ENCODE measurements at regions of chr15 and their contacts with region 1.

Region 1: GRCh38 chr15:100873029-100873677 is 6.5 kb upstream of the ALDH1A3 start:
- DNase-seq: peak; percentile 72
- H3K4me3 ChIP-seq: no peak overlapping the region
- H3K27ac ChIP-seq: no peak overlapping the region
- H3K27me3 ChIP-seq: peaks cover 7% of the 10 kb centered on the region
- CTCF ChIP-seq: peak; percentile 95

Region 2: DNA sequence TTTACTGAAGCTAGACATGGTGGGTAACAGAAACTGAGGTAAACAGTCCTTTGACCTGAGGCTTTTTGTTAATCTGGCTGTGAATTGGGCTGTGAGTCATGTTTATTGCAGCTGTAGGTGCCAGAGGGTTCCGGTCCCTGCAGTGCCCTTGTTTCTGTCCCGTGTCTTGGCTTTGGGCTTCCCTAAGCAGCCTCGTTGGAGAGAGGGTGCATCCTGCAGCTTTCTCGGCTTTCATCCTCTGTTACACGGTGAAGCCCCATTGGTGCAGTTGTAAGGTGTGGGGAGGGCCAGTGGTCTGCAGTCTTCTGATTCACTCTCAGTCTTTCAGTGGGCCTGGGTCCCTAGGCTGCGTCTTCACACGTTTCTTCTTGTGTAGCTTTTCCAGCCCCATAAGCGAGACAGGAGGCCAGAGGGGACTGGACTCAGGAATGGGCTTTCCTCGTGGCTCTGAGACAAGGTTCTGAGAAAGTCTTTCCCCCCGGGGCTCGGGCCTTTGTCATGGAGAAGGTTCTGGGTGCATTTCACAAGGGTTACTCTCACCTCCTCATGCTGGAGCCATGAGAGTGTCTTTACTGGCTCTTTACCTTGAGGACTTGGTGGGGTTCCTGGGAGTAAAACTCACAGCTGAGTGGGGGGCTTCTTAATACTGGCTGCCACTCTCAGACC is 237.6 kb before region 1 on chr15:
- CTCF ChIA-PET with region 1: interaction called, 16 read pairs
- POLR2A ChIA-PET with region 1: no interaction called
- DNase-seq: no peak
- H3K4me3 ChIP-seq: no peak overlapping the region
- H3K27ac ChIP-seq: no peak overlapping the region
- H3K27me3 ChIP-seq: no peaks in the 10 kb centered on the region
- CTCF ChIP-seq: no peak

Region 3: DNA sequence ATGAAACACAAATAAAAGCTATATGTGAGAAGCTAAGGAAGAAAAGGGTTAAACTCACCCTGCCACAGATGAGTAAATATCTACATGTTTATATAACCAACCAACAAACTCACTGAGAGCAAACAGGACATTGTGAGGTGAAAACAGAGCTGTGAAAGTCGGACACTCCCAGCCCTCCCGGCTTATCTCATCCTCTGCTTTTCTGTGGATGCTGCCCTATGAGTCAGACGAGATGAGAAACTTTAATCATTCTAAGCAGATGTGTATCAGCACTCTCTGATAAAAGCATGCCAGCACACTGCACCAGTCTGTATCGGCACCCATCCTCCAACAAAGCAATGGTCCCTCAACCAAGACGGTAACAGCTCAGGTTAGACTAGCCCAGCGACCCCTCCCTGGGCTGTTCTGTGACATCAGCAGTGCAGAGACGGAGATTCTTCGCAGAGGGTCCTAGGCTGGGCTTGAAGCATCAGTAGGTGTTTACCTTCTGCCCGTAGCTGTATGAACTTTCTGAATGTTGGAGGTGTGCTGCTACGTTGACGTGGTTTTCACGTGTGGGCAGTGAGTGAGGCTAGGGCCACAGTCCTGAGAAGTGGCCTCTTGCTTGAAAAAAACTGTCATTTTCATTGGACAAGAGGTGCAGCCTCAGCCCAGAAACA is 113.3 kb before region 1 on chr15:
- CTCF ChIA-PET with region 1: interaction called, 10 read pairs
- POLR2A ChIA-PET with region 1: no interaction called
- DNase-seq: no peak
- H3K4me3 ChIP-seq: no peak overlapping the region
- H3K27ac ChIP-seq: peak overlapping the region; percentile 25
- H3K27me3 ChIP-seq: no peaks in the 10 kb centered on the region
- CTCF ChIP-seq: no peak

Region 4: GRCh38 chr15:100856867-100857266 is 16.3 kb before region 1 on chr15:
- CTCF ChIA-PET with region 1: interaction called, 19 read pairs
- POLR2A ChIA-PET with region 1: no interaction called
- DNase-seq: no peak
- H3K4me3 ChIP-seq: no peak overlapping the region
- H3K27ac ChIP-seq: no peak overlapping the region
- H3K27me3 ChIP-seq: no peaks in the 10 kb centered on the region
- CTCF ChIP-seq: no peak

Region 5: DNA sequence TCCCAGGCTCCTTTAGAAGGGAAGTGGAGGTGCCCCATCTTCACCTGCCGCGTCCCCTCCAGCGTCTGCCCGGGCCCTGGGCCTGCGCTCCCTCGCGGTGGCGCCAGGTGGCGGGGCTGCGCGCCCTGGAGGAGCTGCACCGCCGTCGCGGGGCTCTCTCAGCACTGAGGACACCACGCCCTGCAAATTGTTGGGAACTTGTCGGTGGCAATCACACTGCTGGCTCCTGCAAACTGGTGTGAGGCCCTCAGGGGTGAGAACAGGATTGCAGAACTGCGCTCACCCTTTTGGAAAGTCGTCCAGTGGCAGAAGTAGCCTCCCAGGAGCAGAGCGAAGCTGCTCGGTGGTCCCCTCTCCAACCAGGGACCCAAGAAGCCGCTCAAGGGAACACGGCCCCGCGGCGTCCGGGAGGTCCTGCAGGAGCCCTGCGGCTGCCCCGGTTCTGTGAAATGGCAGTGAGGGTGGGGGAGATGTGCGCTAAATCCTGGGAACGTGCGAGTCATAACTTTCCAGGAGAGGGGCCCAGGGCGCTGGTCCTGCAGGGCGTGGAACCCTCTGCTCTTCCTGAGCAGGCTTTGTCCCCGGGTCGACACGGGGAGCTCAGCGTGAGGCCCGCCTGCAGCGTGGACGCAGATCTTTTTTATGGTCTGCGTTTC is 45.0 kb after region 1 on chr15:
- CTCF ChIA-PET with region 1: interaction called, 12 read pairs
- POLR2A ChIA-PET with region 1: no interaction called
- DNase-seq: no peak
- H3K4me3 ChIP-seq: peak overlapping the region; percentile 66
- H3K27ac ChIP-seq: peak overlapping the region; percentile 21
- H3K27me3 ChIP-seq: no peaks in the 10 kb centered on the region
- CTCF ChIP-seq: peak; percentile 90

Region 6: DNA sequence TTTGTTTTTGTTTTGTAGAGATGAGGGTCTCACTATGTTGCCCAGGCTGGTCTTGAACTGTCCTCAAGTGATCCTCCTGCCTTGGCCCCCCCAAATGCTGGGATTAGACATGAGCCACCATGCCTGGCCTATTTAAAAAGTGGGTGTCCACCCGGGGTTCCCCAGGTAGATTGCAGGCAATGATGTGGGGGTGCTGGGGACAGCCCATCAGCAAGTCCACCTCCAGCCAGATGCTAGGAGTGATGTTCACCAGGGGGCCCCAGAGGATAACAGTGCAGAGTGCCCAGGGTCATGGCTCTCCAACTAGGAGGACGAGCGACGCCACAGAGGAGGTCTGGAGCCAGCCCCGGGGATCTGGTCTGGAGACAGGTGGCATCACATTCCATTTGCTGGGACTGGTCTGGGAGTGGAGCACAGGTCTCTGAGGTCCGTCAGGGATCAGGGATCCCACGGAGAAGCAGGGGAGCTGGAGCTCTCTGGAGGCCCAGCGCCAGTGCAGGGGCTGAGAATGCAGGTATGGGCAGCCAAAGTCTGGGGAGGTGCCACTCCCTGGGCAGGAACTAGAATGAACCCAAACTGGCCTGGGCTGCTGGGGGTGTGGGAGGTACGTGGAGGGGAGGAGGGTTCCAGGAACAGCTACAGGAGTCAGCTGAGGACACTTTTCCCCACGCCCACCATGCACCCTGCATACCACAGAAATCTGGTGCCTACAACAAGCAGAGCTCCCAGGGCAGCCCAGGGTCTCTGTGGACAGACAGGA is 667.5 kb after region 1 on chr15:
- CTCF ChIA-PET with region 1: no interaction called
- POLR2A ChIA-PET with region 1: no interaction called
- DNase-seq: no peak
- H3K4me3 ChIP-seq: no peak overlapping the region
- H3K27ac ChIP-seq: no peak overlapping the region
- H3K27me3 ChIP-seq: no peaks in the 10 kb centered on the region
- CTCF ChIP-seq: 0 out of 2 replicates have a peak, but pooled peaks have one; percentile 3